Activated naive CD8-positive, alpha-beta T cell treated with anti-CD3 and anti-CD28 coated beads, Interleukin-2, amount 10 ng/mL, durations not matched to agents 7 days and 5 days (primary cell): ENCODE measurements at regions of chr1 and their contacts with region 1.

Region 1: DNA sequence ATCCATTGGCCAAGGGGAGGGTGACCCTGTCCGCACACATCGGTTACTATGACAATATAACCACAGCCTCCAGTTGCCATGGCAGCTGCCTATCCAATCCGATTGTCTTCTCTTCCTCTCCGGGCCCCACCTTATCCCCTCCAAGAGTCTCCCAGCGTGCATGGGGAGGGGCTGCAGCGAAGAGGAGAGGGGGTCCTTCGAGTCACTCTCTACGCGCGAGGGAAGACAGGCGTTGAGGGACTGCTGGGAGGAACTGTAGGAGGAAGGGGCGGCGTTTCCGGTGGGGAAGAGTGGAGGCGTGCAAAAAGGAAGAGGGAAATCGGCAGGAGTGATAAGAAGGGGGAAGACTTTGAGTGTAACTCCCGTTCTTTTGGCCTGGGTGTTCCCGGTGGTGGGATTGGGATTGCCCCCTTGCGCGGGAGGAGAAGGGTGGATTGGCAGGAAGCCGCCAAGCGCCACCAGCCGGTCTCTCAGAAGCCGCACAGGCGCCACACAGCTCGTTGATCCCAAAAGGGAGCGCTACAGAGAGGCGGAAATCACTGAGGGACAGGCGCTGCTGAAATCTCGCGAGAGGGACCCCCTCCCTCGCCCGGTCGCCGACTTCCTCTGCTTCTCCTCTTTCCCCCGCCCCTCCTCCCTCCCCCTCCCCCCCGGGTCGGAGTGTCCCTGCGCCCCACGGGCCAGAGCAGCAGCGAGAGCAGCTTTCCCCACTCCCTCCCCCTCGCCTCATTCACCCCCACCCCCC is 384 bp upstream of the SMG7 start:
- DNase-seq: peak; percentile 91
- ATAC-seq: peak; percentile 51
- H3K4me3 Mint-ChIP-seq: peak overlapping the region; percentile 94
- H3K27ac Mint-ChIP-seq: peak overlapping the region; percentile 98
- H3K4me1 Mint-ChIP-seq: peaks cover 17% of the 10 kb centered on the region
- H3K27me3 Mint-ChIP-seq: no peaks in the 10 kb centered on the region

Region 2: GRCh38 chr1:183461350-183461749 is 10.6 kb before region 1 on chr1:
- POLR2A ChIA-PET with region 1: no interaction called
- DNase-seq: no peak
- ATAC-seq: no peak
- H3K4me3 Mint-ChIP-seq: no peak overlapping the region
- H3K27ac Mint-ChIP-seq: no peak overlapping the region
- H3K4me1 Mint-ChIP-seq: peaks cover 3% of the 10 kb centered on the region
- H3K27me3 Mint-ChIP-seq: peaks cover 49% of the 10 kb centered on the region

Region 3: DNA sequence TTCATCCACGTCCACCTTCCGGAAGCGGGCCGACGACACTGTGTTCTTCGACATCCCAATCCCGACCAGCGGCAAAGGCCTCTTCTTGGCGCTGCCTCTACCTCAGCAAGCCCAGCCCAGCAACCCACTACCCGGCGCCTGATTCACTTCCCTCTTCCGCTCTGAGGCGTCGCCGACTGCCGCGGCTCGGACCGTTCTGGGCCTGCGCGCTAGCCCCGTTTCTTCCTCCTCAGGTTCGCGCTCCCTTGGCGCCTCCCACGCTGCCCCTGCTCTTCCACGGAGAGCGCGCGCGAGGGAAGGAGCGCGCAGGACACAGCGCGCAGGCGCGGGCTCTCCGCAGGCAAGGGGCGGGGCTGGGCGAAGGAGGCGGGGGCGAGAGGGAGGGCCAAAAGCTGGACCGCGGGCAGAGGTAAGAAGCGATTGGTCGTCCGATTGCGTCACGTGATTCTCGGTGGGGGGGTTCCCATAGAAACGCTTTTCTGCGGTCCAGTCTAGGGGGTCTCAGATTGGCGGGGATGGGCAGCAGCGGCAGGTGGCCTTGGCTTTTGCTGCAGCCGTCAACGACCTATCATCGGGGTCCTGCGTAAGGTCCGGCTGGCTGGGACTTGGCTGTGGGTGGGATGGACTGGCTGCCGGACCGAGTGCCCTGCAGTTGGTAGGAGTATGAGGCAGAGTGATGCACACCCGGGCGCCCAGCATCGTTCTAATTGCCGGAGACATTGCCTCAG is 163.9 kb after region 1 on chr1 and contains the start of gene ARPC5:
- POLR2A ChIA-PET with region 1: interaction called, 21 read pairs
- DNase-seq: peak; percentile 98
- ATAC-seq: peak; percentile 96
- H3K4me3 Mint-ChIP-seq: peak within 1 kb of the TSS; percentile 100
- H3K27ac Mint-ChIP-seq: peak within 1 kb of the TSS; percentile 100
- H3K4me1 Mint-ChIP-seq: peaks cover 23% of the 10 kb centered on the region
- H3K27me3 Mint-ChIP-seq: peaks cover 22% of the 10 kb centered on the region
- total RNA-seq, gene ARPC5: 186 to 207 TPM